Activated CD4-positive, alpha-beta T cell treated with anti-CD3 and anti-CD28 coated beads, Interleukin-2, amount 10 ng/mL, durations not matched to agents 7 days and 5 days (primary cell): ENCODE measurements at regions of chr9 and their contacts with region 1.

Region 1: GRCh38 chr9:6384732-6385131 is 28.3 kb upstream of the UHRF2 start:
- DNase-seq: no peak
- H3K4me3 Mint-ChIP-seq: no peak overlapping the region
- H3K27ac Mint-ChIP-seq: no peak overlapping the region
- H3K4me1 Mint-ChIP-seq: no peaks in the 10 kb centered on the region
- H3K27me3 Mint-ChIP-seq: peaks cover 2% of the 10 kb centered on the region

Region 2: GRCh38 chr9:6305954-6306563 is 78.7 kb before region 1 on chr9:
- CTCF ChIA-PET with region 1: no interaction called
- POLR2A ChIA-PET with region 1: interaction called, 14 read pairs
- DNase-seq: no peak
- H3K4me3 Mint-ChIP-seq: no peak overlapping the region
- H3K27ac Mint-ChIP-seq: no peak overlapping the region
- H3K4me1 Mint-ChIP-seq: no peaks in the 10 kb centered on the region
- H3K27me3 Mint-ChIP-seq: peaks cover 18% of the 10 kb centered on the region

Region 3: DNA sequence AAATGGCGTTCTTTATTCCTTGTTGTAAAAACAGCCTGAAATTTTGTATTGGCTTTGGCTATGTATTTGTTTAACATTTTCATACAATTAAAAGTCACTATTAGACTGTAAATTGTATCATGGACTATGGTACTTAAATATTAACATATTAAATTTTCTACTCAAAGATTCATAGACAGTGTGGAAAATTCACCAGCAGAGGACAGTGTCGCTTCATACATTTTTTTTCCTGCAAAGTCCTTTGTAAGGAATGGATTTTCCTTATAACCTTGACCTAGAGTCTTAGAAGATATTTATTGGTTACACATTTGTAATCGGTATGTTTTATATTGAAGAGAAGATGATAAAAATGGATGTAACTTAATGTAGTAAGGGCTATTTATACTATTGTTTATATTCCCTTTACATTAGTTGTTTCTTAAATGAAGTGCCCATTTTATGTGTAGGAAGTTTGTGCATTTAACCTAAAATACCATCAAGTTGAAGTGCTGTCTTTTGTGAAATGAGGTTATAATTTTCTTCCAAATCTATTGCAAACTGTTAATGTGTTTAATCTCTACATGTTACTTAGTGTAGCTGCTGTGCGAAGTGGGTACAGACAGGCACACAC is 523.1 kb after region 1 on chr9:
- CTCF ChIA-PET with region 1: no interaction called
- POLR2A ChIA-PET with region 1: no interaction called
- DNase-seq: no peak
- H3K4me3 Mint-ChIP-seq: no peak overlapping the region
- H3K27ac Mint-ChIP-seq: no peak overlapping the region
- H3K4me1 Mint-ChIP-seq: peaks cover 7% of the 10 kb centered on the region
- H3K27me3 Mint-ChIP-seq: no peaks in the 10 kb centered on the region